H1 (cell line): ENCODE measurements at regions of chr3 and their contacts with region 1.

Region 1: GRCh38 chr3:115830764-115831395 is 207.6 kb downstream of the GAP43 start:
- DNase-seq: no peak
- H3K4me3 ChIP-seq: no peak overlapping the region
- H3K27ac ChIP-seq: no peak overlapping the region
- H3K4me1 ChIP-seq: peaks cover 0 to 6% (median 3%) of the 10 kb centered on the region in 4 experiments; a peak in 3 of 7 replicates
- H3K27me3 ChIP-seq: no peaks in the 10 kb centered on the region
- CTCF ChIP-seq: no peak
- EP300 ChIP-seq: no peak
- POLR2A ChIP-seq: no peak
- RAD21 ChIP-seq: no peak

Region 2: DNA sequence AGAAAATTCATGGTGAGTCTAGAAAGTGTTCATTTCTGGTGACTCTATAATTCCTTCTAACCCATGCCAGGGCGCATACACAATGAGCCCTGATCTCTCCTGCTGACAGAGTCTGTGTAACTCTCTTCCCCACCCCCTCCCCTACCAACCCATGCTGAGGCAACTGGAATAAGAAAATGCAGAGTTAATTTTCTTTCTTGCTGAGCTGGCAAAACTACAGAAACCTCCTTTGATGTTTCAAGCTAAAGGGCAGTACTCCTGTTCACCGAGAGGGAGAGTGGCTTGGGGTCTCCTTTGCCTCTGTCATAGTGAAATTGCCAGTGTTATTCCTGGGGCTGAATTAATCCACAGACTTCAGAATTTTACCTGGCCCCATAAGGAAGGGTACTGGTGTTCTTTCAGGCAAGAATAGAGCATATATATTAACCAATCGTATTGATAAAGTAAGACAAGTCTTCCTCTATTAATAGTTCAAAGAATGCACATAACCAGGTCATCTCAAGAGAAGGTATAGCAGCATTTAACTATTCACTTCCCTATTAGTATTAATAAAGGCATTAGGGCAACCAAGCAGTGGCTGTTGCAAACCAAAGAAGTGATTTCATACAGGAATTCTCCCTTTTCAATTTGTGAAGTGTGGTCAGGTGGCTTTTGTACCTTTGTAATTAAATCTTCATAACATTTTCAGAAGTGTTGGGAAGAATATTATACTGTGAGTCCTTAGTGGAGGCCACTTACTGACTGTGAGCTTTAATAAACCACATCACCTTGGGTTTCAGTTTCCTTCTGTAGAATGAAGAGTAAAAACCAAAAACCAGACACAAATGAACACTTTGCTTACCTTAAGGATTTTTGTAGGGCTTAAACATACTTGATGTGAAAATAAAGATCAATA is 203.5 kb before region 1 on chr3:
- CTCF ChIA-PET with region 1: no interaction called
- POLR2A ChIA-PET with region 1: no interaction called
- DNase-seq: no peak
- H3K4me3 ChIP-seq: peak overlapping the region in 1 of 4 experiments; percentile 18; a peak in 1 of 8 replicates
- H3K27ac ChIP-seq: no peak overlapping the region
- H3K4me1 ChIP-seq: peaks cover 1 to 19% (median 11%) of the 10 kb centered on the region in 4 experiments; a peak in 6 of 7 replicates
- H3K27me3 ChIP-seq: peaks cover 0 to 6% (median 2%) of the 10 kb centered on the region in 4 experiments; a peak in 2 of 7 replicates
- CTCF ChIP-seq: peak in 1 of 3 experiments; percentile 12; a peak in 1 of 4 replicates
- EP300 ChIP-seq: no peak
- POLR2A ChIP-seq: no peak
- RAD21 ChIP-seq: no peak

Region 3: GRCh38 chr3:115819785-115820384 is 11.0 kb before region 1 on chr3:
- CTCF ChIA-PET with region 1: interaction called, 21 read pairs
- POLR2A ChIA-PET with region 1: no interaction called
- DNase-seq: peak in 1 of 2 experiments; percentile 10
- H3K4me3 ChIP-seq: no peak overlapping the region
- H3K27ac ChIP-seq: no peak overlapping the region
- H3K4me1 ChIP-seq: no peaks in the 10 kb centered on the region
- H3K27me3 ChIP-seq: no peaks in the 10 kb centered on the region
- CTCF ChIP-seq: peak in 2 of 3 experiments; percentile 98 to 100; a peak in 3 of 4 replicates
- EP300 ChIP-seq: no peak
- POLR2A ChIP-seq: no peak
- RAD21 ChIP-seq: peak; percentile 91 to 93